ENCODE measurements at regions of chr4 and their contacts with region 1.

Region 1: DNA sequence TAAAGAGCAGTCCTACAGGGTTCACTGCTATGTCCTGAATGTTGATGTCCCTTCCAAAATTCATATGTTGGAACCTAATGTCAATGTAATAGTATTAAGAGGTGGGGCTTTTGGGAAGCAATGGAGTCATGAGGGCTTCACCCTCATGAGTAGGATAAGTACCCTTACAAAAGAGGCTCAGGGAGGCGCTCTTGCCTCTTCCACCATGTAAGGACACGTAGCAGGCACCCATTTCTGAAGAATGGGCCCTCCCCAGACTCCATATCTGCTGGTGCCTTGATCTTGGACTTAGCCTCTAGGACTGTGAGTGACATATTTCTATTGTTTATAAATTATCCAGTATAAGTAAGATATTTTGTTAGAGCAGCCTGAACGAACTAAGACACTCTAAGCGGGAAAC is 15.8 kb downstream of the MED28 start:
- DNase-seq: no peak
- ATAC-seq: no peak
- H3K4me3 ChIP-seq: no peak overlapping the region
- H3K27ac ChIP-seq: no peak overlapping the region
- H3K4me1 ChIP-seq: no peaks in the 10 kb centered on the region
- H3K27me3 ChIP-seq: no peaks in the 10 kb centered on the region
- CTCF ChIP-seq: no peak

Region 2: GRCh38 chr4:17544205-17544604 is 86.0 kb before region 1 on chr4:
- CTCF ChIA-PET with region 1: no interaction called
- POLR2A ChIA-PET with region 1: no interaction called
- in situ Hi-C with region 1: no loop called
- intact Hi-C with region 1: loop called (anchors 5 kb)
- DNase-seq: peak; percentile 5
- ATAC-seq: no peak
- H3K4me3 ChIP-seq: no peak overlapping the region
- H3K27ac ChIP-seq: no peak overlapping the region
- H3K4me1 ChIP-seq: no peaks in the 10 kb centered on the region
- H3K27me3 ChIP-seq: no peaks in the 10 kb centered on the region
- CTCF ChIP-seq: no peak

Region 3: DNA sequence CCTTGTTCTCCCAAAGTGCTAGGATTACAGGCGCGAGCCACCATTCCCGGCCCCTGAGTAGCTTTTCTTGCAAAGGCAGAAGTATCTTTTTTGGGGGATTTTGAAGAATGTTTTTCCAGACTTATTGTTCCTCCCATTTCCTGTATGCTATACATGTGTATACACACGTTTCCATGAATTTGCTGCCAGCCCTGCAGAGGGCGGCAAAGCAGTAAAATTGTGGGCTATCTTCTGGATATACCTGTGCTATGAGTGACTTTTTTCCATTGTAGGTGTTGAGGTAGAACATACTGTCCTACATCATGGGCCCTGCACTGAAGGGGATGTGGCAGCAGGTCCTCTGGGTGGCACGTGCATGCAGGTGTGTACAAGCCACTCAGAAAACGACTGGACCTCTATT is 32.7 kb before region 1 on chr4:
- CTCF ChIA-PET with region 1: no interaction called
- POLR2A ChIA-PET with region 1: no interaction called
- in situ Hi-C with region 1: no loop called
- intact Hi-C with region 1: no loop called
- DNase-seq: no peak
- ATAC-seq: peak; percentile 82
- H3K4me3 ChIP-seq: no peak overlapping the region
- H3K27ac ChIP-seq: no peak overlapping the region
- H3K4me1 ChIP-seq: no peaks in the 10 kb centered on the region
- H3K27me3 ChIP-seq: no peaks in the 10 kb centered on the region
- CTCF ChIP-seq: peak; percentile 62